Caco-2 (cell line): ENCODE measurements at regions of chr7 and their contacts with region 1.

Region 1: DNA sequence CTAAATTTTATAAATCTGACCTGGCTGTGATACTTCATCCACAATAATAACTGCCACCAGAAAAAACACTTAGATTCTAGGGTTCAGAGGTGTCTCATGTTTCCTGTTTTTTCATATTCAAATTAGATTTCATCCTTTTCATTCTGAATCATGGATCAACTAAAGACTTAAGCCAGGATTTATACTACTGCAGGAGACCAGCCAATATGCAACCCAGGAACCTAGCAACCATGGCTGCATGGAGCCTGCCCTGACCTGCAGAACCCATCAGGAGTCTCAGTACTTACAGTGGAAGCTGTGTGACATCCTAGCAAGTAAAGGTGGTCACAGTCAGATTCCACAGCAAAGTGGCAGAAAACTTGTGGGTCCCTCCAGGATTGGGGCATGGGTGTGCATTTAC is 40.5 kb upstream of the RNF148 start:
- DNase-seq: no peak
- H3K4me3 ChIP-seq: no peak overlapping the region
- H3K4me3 Mint-ChIP-seq: no peak overlapping the region
- H3K27ac Mint-ChIP-seq: no peak overlapping the region
- H3K4me1 ChIP-seq: no peaks in the 10 kb centered on the region
- H3K4me1 Mint-ChIP-seq: no peaks in the 10 kb centered on the region
- H3K27me3 ChIP-seq: no peaks in the 10 kb centered on the region
- H3K27me3 Mint-ChIP-seq: no peaks in the 10 kb centered on the region
- CTCF ChIP-seq: no peak

Region 2: GRCh38 chr7:121313793-121314676 is 1429.2 kb before region 1 on chr7:
- CTCF ChIA-PET with region 1: no interaction called
- POLR2A ChIA-PET with region 1: interaction called, 18 read pairs
- intact Hi-C with region 1: no loop called
- DNase-seq: no peak
- H3K4me3 ChIP-seq: no peak overlapping the region
- H3K4me3 Mint-ChIP-seq: no peak overlapping the region
- H3K27ac Mint-ChIP-seq: no peak overlapping the region
- H3K4me1 ChIP-seq: no peaks in the 10 kb centered on the region
- H3K4me1 Mint-ChIP-seq: no peaks in the 10 kb centered on the region
- H3K27me3 ChIP-seq: no peaks in the 10 kb centered on the region
- H3K27me3 Mint-ChIP-seq: peaks cover 13% of the 10 kb centered on the region
- CTCF ChIP-seq: no peak

Region 3: GRCh38 chr7:122803323-122803722 is 60.1 kb after region 1 on chr7:
- CTCF ChIA-PET with region 1: no interaction called
- POLR2A ChIA-PET with region 1: no interaction called
- intact Hi-C with region 1: no loop called
- DNase-seq: no peak
- H3K4me3 ChIP-seq: no peak overlapping the region
- H3K4me3 Mint-ChIP-seq: no peak overlapping the region
- H3K27ac Mint-ChIP-seq: no peak overlapping the region
- H3K4me1 ChIP-seq: no peaks in the 10 kb centered on the region
- H3K4me1 Mint-ChIP-seq: no peaks in the 10 kb centered on the region
- H3K27me3 ChIP-seq: no peaks in the 10 kb centered on the region
- H3K27me3 Mint-ChIP-seq: no peaks in the 10 kb centered on the region
- CTCF ChIP-seq: peak; percentile 26 to 50

Region 4: DNA sequence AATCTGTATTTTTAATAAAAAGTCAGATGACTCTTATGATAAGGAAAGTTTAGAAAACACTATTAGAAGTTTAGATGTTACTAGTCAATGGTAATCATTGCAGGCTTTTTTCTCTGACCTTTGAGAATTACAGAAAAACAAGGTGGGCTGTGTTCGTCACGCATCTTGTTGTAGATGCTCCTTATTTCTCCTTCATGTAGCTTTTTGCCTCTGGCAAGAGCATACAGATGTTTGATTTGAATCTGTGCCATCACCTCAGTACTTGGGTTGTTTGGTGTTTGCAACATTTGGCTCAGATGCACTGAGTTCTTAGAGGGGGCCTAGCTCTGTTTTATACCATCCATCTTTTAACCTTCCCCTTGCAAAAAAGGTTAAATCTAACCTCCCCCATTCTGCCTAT is 240.8 kb after region 1 on chr7:
- CTCF ChIA-PET with region 1: no interaction called
- POLR2A ChIA-PET with region 1: no interaction called
- intact Hi-C with region 1: no loop called
- DNase-seq: no peak
- H3K4me3 ChIP-seq: no peak overlapping the region
- H3K4me3 Mint-ChIP-seq: no peak overlapping the region
- H3K27ac Mint-ChIP-seq: no peak overlapping the region
- H3K4me1 ChIP-seq: no peaks in the 10 kb centered on the region
- H3K4me1 Mint-ChIP-seq: no peaks in the 10 kb centered on the region
- H3K27me3 ChIP-seq: no peaks in the 10 kb centered on the region
- H3K27me3 Mint-ChIP-seq: peaks cover 3% of the 10 kb centered on the region
- CTCF ChIP-seq: no peak